ENCODE measurements at regions of chrX and their contacts with region 1.

Region 1: DNA sequence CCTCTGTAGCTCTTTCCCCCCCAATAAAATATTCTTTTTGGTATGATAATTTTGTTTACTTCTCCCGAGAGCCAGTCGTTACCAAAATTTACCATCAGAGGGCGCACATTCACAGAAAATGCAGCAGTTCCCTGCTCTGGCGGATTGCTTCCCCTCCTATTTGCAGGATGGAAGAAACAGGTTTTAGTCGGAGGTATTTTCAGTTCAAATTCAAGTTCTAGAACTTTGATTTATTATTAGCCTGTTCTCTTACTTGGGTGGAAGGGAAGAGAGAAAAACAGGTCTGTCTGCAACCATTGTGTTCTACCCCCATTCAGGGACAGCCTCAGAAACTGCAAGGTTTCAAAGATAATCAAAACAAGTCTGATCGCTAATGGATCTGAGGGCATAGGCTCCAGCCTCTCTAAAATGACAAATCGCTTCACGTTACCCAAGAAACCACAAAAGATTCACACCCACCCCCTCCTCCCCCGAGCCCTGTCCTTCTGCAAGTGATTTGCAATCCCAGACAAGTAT is 263.8 kb upstream of the RPS6KA3 start:
- DNase-seq: no peak

Region 2: DNA sequence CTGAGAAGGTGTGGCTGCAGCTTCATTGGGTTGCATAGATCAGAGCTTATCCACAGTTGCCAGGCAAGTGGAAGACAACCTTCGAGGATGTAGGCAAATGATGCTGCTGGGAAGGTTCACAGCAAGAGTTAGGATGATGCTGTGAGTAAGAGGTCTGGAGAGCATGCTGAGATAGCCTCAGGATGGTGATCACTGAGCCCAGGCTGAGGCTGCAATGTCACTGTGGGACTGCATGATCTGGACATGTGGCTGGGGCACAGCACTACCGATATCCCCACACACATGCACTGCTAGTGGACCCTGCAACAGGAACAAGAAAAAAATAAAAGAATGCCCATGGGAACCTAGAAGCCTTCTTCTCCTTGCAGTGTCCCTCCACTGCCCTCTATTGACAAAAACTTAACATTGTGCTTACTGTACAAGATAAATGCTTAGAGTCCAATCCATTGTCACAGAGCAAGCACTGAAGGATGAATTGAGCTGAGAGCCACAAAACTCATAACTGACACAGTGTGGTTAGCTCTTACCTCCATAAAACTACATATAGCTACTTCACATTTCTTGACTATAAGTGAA is 949.3 kb after region 1 on chrX:
- intact Hi-C with region 1: loop called (anchors 5 kb)
- DNase-seq: no peak

Region 3: DNA sequence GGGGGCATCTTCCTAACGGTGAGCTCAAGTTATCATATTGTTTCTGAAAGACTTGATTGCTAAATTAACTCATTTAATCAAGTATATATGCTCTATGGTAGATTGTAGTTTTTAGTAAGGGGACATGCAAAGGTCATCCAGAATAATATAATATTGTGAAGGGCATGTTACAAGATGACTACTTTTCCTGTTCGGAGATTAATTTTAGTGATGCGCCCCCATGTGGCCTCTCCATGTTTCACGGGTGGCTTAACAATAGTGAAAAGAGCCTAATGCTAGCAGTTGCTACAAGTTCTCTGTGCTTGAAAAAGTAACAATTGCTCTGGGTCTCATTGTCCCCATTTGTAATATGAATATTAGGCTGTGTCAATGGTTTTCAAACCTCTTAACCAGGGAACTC is 1215.3 kb after region 1 on chrX:
- intact Hi-C with region 1: loop called (anchors 10 kb)
- DNase-seq: no peak